ENCODE measurements at regions of chr4 and their contacts with region 1.

Region 1: GRCh38 chr4:35591035-35591434 is 653.3 kb downstream of the ARAP2 start:
- DNase-seq: no peak
- ATAC-seq: no peak
- H3K4me3 ChIP-seq: no peak overlapping the region
- H3K27ac ChIP-seq: no peak overlapping the region
- H3K4me1 ChIP-seq: no peaks in the 10 kb centered on the region
- H3K27me3 ChIP-seq: no peaks in the 10 kb centered on the region
- CTCF ChIP-seq: no peak

Region 2: GRCh38 chr4:36815536-36815935 is 1224.5 kb after region 1 on chr4:
- intact Hi-C with region 1: loop called in 1 of 10 experiments (anchors 10 kb)
- DNase-seq: no peak
- ATAC-seq: no peak
- H3K4me3 ChIP-seq: no peak overlapping the region
- H3K27ac ChIP-seq: no peak overlapping the region
- H3K4me1 ChIP-seq: no peaks in the 10 kb centered on the region
- H3K27me3 ChIP-seq: no peaks in the 10 kb centered on the region
- CTCF ChIP-seq: no peak